HepG2 (cell line): ENCODE measurements at regions of chr20 and their contacts with region 1.

Region 1: DNA sequence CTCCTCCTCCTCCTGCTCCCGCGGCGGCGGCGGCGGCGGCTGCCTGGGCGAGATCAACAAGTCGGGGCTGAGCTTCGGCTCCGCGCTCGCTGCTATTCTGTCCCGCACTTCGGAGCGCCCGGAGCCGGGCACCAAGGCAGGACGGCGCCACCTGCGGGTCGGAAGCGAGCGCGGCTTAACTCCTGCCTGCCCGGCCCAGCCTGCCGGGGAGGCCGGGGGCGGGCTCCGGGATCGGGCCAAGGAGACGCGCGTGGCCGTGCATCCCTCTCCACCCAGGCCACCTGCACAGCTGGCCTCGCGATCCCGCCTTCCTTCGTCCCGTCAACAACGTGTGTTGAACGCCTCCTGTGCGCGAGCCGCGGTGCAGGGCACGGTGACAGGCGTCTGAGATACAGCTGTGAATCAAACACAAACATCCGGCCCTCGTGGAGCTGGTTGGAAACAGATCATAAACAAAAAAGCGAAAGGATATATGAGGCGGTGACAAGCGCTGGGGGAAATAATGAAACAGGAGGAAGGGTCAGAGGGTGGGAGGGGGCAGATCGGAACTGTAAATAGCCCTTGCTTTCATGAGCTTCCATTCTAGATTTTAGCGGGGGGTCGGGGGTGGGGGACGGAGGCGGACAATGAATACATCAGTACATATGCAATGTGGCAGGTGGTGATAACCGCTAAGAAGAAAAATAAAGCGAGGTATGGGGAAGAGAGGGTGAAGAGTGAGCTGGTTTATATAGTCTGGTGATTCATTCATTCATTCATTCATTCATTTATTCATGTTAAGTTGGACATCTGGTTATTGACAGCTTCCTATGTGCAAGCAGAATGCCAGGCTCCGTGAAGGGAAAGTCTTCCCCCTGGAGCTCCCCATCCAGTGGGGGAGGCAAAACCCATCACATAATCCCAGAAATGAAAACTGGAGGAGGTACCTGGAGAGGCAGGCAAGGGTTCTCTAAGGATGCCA is 2.0 kb upstream of the KCNB1 start:
- DNase-seq: peak; percentile 68
- ATAC-seq: peak; percentile 91
- H3K4me3 ChIP-seq: peak overlapping the region; percentile 41 to 70 (median 48); a peak in 5 of 6 replicates
- H3K27ac ChIP-seq: no peak overlapping the region
- H3K4me1 ChIP-seq: peaks cover 18% of the 10 kb centered on the region
- H3K27me3 ChIP-seq: peaks cover 4 to 36% of the 10 kb centered on the region in 2 experiments; a peak in 3 of 5 replicates
- CTCF ChIP-seq: peak; percentile 97
- EP300 ChIP-seq: no peak
- POLR2A ChIP-seq: no peak
- RAD21 ChIP-seq: peak; percentile 99

Region 2: DNA sequence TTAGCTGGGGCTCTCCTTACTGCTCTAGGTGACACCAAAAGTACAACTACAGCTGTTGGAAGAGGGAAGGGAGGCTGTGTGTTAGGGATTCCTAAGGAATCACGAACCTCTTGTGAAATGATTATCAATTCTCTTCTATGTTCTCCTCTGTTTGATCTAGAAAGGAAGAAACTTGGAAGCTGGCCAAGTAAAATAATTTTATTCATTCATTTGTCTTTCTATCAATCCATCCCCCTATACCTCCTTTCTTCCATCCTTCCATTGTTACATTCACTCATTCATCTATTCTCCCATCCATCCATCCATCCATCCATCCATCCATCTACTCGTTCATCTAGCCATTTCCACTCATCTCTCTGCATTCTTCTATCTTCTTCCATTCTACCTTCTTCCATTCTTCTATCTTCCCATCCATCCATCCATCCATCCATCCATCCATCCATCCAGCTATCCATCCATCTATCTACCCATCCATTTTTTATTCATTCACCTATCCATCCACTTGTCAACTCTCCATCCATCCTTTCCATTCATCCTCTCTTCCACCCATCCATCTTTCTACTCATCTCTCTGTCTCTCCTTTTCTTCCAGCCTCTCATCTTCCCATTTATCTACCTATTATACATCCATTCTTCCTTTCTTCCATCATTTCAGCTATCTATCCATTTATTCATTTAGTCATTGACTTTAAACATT is 153.8 kb before region 1 on chr20:
- CTCF ChIA-PET with region 1: interaction called, 159 read pairs
- POLR2A ChIA-PET with region 1: no interaction called
- in situ Hi-C with region 1: loop called (anchors 5 kb)
- intact Hi-C with region 1: loop called (anchors 1 kb)
- DNase-seq: no peak
- ATAC-seq: no peak
- H3K4me3 ChIP-seq: no peak overlapping the region
- H3K27ac ChIP-seq: no peak overlapping the region
- H3K4me1 ChIP-seq: no peaks in the 10 kb centered on the region
- H3K27me3 ChIP-seq: peaks cover 5 to 46% of the 10 kb centered on the region in 2 experiments; a peak in 4 of 5 replicates
- CTCF ChIP-seq: no peak
- EP300 ChIP-seq: no peak
- POLR2A ChIP-seq: no peak
- RAD21 ChIP-seq: no peak

Region 3: GRCh38 chr20:49338061-49338460 is 146.4 kb before region 1 on chr20:
- CTCF ChIA-PET with region 1: interaction called, 159 read pairs
- POLR2A ChIA-PET with region 1: no interaction called
- in situ Hi-C with region 1: loop called (anchors 5 kb)
- intact Hi-C with region 1: loop called (anchors 1 kb)
- DNase-seq: no peak
- ATAC-seq: no peak
- H3K4me3 ChIP-seq: no peak overlapping the region
- H3K27ac ChIP-seq: no peak overlapping the region
- H3K4me1 ChIP-seq: no peaks in the 10 kb centered on the region
- H3K27me3 ChIP-seq: peaks cover 1 to 25% of the 10 kb centered on the region in 2 experiments; a peak in 3 of 5 replicates
- CTCF ChIP-seq: no peak
- EP300 ChIP-seq: no peak
- POLR2A ChIP-seq: no peak
- RAD21 ChIP-seq: no peak

Region 4: DNA sequence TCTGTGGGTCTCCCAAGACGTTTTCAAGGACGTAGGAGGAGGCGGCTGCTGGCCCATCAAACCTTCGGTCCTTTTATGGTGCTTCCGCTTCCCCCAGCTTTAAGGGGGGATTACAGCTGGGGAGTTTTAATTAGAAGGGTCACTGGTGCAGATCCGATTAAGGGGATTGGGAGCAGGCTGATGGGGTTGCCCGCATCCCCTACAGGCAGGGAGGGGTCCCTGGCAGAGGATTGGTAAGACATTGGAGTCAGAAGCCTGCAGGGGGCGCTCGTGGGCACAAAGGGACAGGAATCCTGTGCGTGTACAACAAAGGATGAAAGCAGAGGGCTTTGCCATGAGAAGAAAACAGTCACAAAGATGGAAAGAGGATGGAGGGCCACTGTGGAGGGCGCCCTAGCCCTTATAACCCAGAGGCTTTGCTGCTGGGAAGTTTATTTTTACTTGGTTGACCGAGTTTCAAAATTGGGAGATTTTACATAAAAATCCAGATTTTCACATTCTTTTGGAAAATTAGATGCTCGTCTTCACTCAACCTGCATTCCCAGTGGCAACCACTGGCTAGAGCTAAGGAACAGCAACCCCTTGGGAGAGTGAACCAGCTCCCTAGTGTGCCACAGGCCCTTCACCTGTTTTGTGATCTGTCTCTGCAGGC is 99.9 kb before region 1 on chr20:
- CTCF ChIA-PET with region 1: interaction called, 13 read pairs
- POLR2A ChIA-PET with region 1: no interaction called
- in situ Hi-C with region 1: loop called (anchors 5 kb)
- intact Hi-C with region 1: loop called (anchors 1 kb)
- DNase-seq: peak; percentile 79
- ATAC-seq: peak; percentile 89
- H3K4me3 ChIP-seq: no peak overlapping the region
- H3K27ac ChIP-seq: no peak overlapping the region
- H3K4me1 ChIP-seq: no peaks in the 10 kb centered on the region
- H3K27me3 ChIP-seq: peaks cover 6 to 25% of the 10 kb centered on the region in 2 experiments; a peak in 3 of 5 replicates
- CTCF ChIP-seq: peak; percentile 79
- EP300 ChIP-seq: no peak
- POLR2A ChIP-seq: no peak
- RAD21 ChIP-seq: peak; percentile 54; the same call in 1 of the 2 replicates

Region 5: DNA sequence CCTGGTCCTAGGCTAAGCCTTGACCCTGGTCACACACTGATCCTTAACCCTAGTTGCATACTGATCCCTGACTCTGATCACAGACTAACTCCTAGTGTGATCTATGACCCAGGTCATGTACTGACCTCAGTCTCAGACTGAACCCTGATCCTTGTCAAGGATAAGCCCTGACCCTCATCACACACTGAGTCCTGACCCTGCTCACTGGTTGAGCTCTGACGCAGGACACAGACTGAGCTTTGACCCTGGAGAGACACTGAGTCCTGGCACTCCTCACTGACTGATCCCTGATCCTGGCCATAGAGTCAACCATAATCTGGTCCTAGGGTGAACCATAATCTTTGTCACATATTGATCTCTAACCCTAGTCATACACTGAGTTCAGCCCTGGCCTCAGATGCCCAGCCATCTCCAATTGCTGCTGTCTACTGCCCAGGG is 39.9 kb before region 1 on chr20:
- CTCF ChIA-PET with region 1: no interaction called
- POLR2A ChIA-PET with region 1: no interaction called
- in situ Hi-C with region 1: no loop called
- intact Hi-C with region 1: loop called (anchors 5 kb)
- DNase-seq: peak; percentile 18
- ATAC-seq: peak; percentile 59
- H3K4me3 ChIP-seq: no peak overlapping the region
- H3K27ac ChIP-seq: no peak overlapping the region
- H3K4me1 ChIP-seq: peaks cover 13% of the 10 kb centered on the region
- H3K27me3 ChIP-seq: no peaks in the 10 kb centered on the region; a peak in 1 of 5 replicates
- CTCF ChIP-seq: no peak
- EP300 ChIP-seq: no peak
- POLR2A ChIP-seq: no peak
- RAD21 ChIP-seq: no peak

Region 6: DNA sequence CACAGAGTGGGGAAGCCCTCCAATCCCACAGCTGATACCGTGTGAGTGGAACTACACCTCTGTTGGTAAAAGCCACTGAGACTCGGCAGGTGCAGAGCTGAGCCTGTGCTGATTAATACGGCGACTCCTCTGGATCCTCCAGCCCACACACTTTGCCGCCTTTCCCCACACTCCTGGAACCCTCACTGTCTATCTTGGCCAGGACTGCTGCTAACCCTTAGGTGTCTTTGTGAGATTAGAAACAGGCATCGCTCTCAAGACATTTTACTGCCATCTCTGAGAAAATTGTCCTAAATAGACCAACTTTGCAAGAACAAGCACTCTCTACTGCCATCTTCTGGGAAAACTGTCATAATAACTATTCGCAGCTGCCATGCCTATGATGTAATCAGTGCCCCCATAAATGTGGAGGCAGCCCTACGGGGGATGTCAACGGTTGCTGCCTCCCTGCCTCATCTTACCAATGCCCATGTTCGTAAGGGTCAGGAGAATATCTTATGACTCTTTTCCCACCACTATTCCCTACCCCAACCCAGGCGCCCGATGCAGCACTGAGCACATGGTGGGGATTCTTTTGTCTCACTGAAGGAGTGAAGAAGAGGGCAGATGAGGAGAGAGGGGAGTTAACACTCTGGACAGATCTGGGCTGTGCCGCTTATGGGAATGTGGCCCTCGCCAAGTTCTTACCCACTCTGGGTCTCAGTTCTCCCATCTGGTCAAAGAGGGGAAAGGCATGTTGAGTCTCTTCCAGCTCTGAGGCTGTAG is 24.2 kb after region 1 on chr20:
- CTCF ChIA-PET with region 1: interaction called, 6 read pairs
- POLR2A ChIA-PET with region 1: no interaction called
- in situ Hi-C with region 1: no loop called
- intact Hi-C with region 1: loop called (anchors 1 kb)
- DNase-seq: peak; percentile 56
- ATAC-seq: peak; percentile 60
- H3K4me3 ChIP-seq: no peak overlapping the region
- H3K27ac ChIP-seq: no peak overlapping the region
- H3K4me1 ChIP-seq: no peaks in the 10 kb centered on the region
- H3K27me3 ChIP-seq: peaks cover 1 to 40% of the 10 kb centered on the region in 2 experiments; a peak in 3 of 5 replicates
- CTCF ChIP-seq: peak; percentile 84
- EP300 ChIP-seq: no peak
- POLR2A ChIP-seq: no peak
- RAD21 ChIP-seq: peak; percentile 62